ENCODE measurements at regions of chr3 and their contacts with region 1.

Region 1: DNA sequence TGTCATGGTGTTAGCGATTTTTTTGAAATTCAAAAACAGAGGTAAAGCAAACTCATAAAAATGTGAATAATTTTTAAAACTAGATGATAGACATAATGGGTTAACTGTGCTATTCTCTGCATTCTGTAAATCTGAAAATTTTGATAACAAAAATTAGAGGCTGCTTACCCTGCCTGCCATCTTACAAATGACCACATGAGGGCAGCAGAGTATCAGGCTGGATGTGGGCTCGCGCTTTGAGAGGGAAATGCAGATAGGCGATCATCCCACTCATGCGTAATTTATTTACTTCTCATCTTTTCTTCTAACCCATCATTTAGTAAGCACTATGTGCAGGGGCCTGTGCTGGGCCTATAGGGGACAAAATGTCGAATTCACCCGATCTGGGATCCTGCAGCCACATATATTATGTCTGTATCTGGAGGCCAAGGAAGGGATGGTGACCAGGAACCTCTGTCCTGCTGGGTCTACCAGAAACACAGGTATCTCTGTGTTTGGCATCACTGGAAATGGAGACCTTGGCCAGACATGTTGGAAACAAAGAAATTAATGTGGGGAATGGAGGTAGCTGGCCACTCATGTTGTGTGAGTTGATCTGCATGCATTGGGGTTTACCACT is 7.8 kb upstream of the RAD18 start:
- DNase-seq: peak in 41 of 42 donors; percentile 52 to 91 (median 76)

Region 2: GRCh38 chr3:8550611-8551010 is 420.5 kb before region 1 on chr3:
- intact Hi-C with region 1: no loop called
- DNase-seq: no peak

Region 3: GRCh38 chr3:8996681-8997121 is 25.6 kb after region 1 on chr3:
- intact Hi-C with region 1: no loop called
- DNase-seq: peak; percentile 34 to 84 (median 68)

Region 4: DNA sequence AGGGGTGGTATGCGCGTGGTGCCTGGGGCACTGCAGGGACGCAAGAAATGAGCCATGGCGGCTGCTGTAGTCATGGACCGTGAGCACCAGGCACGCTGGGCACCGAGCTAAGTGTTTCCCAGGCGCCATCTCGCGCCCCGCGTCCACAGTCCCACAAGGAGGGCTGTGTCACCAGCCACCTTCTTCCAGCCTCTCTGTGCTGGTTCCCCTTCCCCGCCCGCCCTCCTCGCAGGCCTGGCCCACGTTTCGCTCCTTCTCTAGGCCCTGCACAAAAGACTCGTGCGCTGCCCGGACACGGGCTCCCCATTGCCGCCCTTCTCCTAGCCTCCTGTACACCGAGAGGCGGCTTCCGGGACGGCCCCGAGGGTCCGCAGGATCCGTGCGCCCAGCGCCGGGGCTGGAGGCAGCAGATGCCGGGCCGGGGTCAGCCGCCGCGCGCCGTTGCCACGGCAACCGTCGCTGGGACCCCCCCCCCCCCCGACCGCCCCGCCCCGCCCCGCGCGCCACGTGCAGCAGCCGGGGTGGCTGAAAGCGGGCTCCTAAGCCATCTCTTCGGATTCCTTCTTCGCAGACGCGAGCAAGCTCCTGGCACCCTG is 164.9 kb after region 1 on chr3:
- intact Hi-C with region 1: no loop called
- DNase-seq: peak in 41 of 42 donors; percentile 31 to 82 (median 59)

Region 5: GRCh38 chr3:9302425-9303181 is 331.5 kb after region 1 on chr3:
- intact Hi-C with region 1: loop called (anchors 5 kb)
- DNase-seq: peak; percentile 66 to 93 (median 84)

Measured in head of caudate nucleus (tissue), 42 donors.